Activated T-helper 2 cell treated with anti-CD3 and anti-CD28 coated beads, Interferon-gamma antibody, Interleukin-2, Interleukin-4, amounts not matched to agents 10 μg/mL and 5 μg/mL and 100 μg/mL, durations not matched to agents 14 hours and 24 hours and 36 hours (primary cell): ENCODE measurements at regions of chr2 and their contacts with region 1.

Region 1: DNA sequence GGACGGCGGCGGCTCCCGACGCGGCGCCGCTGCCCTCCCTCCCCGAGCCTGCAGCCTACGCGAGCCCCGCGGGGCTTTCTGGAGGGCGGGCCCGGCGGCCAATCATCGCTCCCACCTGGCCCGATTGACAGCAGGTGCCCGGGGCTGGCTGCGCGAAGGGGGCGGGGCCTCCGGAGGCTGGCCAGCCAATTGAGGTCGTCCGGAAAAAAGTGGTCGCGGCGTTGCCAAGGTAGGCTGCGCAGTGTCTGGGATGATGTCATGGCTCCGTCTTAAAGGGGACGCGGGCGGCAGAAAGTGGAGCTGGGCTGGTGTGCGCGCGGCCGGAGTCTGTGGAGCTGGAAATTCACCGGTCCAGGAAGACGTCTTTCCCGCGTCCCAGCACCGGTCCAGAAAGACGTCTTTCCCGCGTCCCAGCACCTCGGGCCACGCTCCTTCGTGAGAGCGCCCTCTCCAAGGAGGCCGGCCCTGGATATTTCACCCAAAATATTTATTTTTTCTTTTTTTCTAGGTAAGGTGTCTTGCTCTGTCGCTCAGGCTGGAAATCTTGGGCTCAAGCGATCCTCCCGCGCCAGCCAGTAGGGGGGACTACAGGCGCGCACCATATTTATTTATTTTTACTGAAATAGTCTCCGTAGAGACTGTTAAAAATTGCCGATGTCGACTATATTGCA is at the start of gene ACTR1B:
- DNase-seq: peak; percentile 98
- H3K4me3 Mint-ChIP-seq: peak within 1 kb of the TSS; percentile 92
- H3K27ac Mint-ChIP-seq: peak within 1 kb of the TSS; percentile 98
- H3K4me1 Mint-ChIP-seq: peaks cover 30% of the 10 kb centered on the region
- H3K27me3 Mint-ChIP-seq: no peaks in the 10 kb centered on the region
- total RNA-seq, gene ACTR1B: 142 and 147 TPM in 2 replicates

Region 2: GRCh38 chr2:97645695-97646629 is 18.1 kb before region 1 on chr2 and contains the start of gene COX5B:
- intact Hi-C with region 1: loop called (anchors 1 kb)
- DNase-seq: peak; percentile 98
- H3K4me3 Mint-ChIP-seq: peak within 1 kb of the TSS; percentile 93
- H3K27ac Mint-ChIP-seq: peak within 1 kb of the TSS; percentile 97
- H3K4me1 Mint-ChIP-seq: peaks cover 19% of the 10 kb centered on the region
- H3K27me3 Mint-ChIP-seq: no peaks in the 10 kb centered on the region
- total RNA-seq, gene COX5B: 217 and 237 TPM in 2 replicates

Region 3: GRCh38 chr2:97697252-97698235 is 33.4 kb after region 1 on chr2:
- intact Hi-C with region 1: loop called (anchors 1 kb)
- DNase-seq: peak; percentile 82
- H3K4me3 Mint-ChIP-seq: no peak overlapping the region
- H3K27ac Mint-ChIP-seq: peak overlapping the region; percentile 14
- H3K4me1 Mint-ChIP-seq: peaks cover 11% of the 10 kb centered on the region
- H3K27me3 Mint-ChIP-seq: no peaks in the 10 kb centered on the region

Region 4: DNA sequence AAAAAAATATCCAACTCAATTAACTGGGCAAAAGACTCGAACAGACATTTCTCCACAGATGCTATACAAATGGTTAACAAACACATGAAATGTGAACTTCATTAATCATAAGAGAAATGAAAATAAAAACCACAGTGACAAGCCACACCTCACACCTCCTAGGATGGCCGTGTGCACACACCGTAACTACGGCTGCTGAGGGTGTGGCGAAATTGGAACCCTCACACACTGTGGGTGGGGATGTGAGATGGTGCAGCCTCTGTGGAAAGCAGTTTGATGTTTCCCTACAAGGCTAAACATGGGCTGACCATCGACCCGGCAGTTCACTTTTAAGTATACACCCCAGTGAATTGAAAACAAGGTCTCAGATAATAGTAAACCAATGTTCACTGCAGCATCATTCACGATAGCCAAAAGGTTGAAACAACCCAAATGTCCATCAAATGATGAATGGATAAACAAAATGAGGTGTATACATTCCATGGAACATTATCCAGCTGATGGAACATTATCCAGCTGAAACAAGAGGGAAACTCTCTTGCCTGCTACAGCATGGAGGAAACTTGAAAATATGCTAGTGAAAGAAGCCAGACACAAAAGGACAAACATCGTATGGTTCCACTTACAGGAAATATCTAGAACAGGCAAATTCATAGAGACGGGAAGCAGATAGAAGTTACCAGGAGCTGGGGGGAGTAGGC is 81.5 kb after region 1 on chr2:
- intact Hi-C with region 1: loop called (anchors 1 kb)
- DNase-seq: peak; percentile 46
- H3K4me3 Mint-ChIP-seq: no peak overlapping the region
- H3K27ac Mint-ChIP-seq: peak overlapping the region; percentile 1
- H3K4me1 Mint-ChIP-seq: peaks cover 57% of the 10 kb centered on the region
- H3K27me3 Mint-ChIP-seq: no peaks in the 10 kb centered on the region

Region 5: GRCh38 chr2:97798416-97798815 is 134.3 kb after region 1 on chr2:
- intact Hi-C with region 1: no loop called
- DNase-seq: no peak
- H3K4me3 Mint-ChIP-seq: no peak overlapping the region
- H3K27ac Mint-ChIP-seq: no peak overlapping the region
- H3K4me1 Mint-ChIP-seq: peaks cover 2% of the 10 kb centered on the region
- H3K27me3 Mint-ChIP-seq: no peaks in the 10 kb centered on the region